ENCODE measurements at regions of chr20 and their contacts with region 1.

Region 1: GRCh38 chr20:63223221-63224207 is 7.6 kb upstream of the YTHDF1 start:
- DNase-seq: peak; percentile 73
- ATAC-seq: peak; percentile 67
- H3K4me3 ChIP-seq: no peak overlapping the region
- H3K27ac ChIP-seq: no peak overlapping the region
- H3K4me1 ChIP-seq: peaks cover 4% of the 10 kb centered on the region; the same call in 1 of the 2 replicates
- H3K27me3 ChIP-seq: peaks cover 32 to 77% of the 10 kb centered on the region in 2 experiments; a peak in 4 of 5 replicates
- CTCF ChIP-seq: peak; percentile 96
- EP300 ChIP-seq: no peak
- POLR2A ChIP-seq: no peak
- RAD21 ChIP-seq: peak; percentile 81

Region 2: GRCh38 chr20:63252284-63252711 is 28.8 kb after region 1 on chr20:
- CTCF ChIA-PET with region 1: interaction called, 10 read pairs
- POLR2A ChIA-PET with region 1: no interaction called
- in situ Hi-C with region 1: no loop called
- intact Hi-C with region 1: no loop called
- DNase-seq: no peak
- ATAC-seq: no peak
- H3K4me3 ChIP-seq: no peak overlapping the region
- H3K27ac ChIP-seq: no peak overlapping the region
- H3K4me1 ChIP-seq: peaks cover 17% of the 10 kb centered on the region
- H3K27me3 ChIP-seq: peaks cover 26 to 84% of the 10 kb centered on the region in 2 experiments
- CTCF ChIP-seq: no peak
- EP300 ChIP-seq: no peak
- POLR2A ChIP-seq: no peak
- RAD21 ChIP-seq: no peak

Region 3: DNA sequence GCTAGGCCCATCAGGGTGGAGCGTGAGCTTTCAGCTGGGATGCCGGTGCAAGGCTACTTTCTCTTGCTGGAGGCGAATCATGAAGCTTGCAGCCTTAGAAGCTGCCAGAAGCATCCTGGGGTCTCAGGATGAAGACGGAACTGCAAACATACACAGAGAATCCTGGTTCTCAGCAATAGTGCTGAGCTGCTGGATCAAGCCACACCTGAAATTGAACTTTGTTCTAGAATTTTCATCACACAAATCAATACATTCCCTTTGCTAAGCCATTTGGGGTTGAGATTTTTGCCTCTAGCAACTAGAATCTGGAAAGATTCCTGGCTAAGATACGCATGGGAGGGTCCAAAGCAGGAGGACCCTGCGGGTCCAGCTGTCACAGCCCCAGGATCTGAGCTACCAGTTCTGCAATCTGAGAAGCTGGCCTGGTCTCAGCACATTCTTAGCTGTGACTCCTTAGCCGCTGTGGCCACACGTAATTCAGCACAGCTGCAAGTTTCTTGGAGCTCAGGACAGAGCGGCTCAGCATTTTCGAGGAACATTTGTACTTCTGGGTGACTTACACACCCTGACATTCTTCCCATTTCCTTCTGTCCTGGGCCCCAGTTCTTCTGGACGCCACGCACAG is 42.5 kb after region 1 on chr20:
- CTCF ChIA-PET with region 1: no interaction called
- POLR2A ChIA-PET with region 1: no interaction called
- in situ Hi-C with region 1: no loop called
- intact Hi-C with region 1: loop called (anchors 5 kb)
- DNase-seq: no peak
- ATAC-seq: no peak
- H3K4me3 ChIP-seq: no peak overlapping the region
- H3K27ac ChIP-seq: no peak overlapping the region
- H3K4me1 ChIP-seq: peaks cover 48% of the 10 kb centered on the region
- H3K27me3 ChIP-seq: peaks cover 11 to 50% of the 10 kb centered on the region in 2 experiments; a peak in 4 of 5 replicates
- CTCF ChIP-seq: no peak
- EP300 ChIP-seq: no peak
- POLR2A ChIP-seq: no peak
- RAD21 ChIP-seq: no peak

Region 4: GRCh38 chr20:63290677-63291472 is 67.4 kb after region 1 on chr20:
- CTCF ChIA-PET with region 1: interaction called, 7 read pairs
- POLR2A ChIA-PET with region 1: no interaction called
- in situ Hi-C with region 1: no loop called
- intact Hi-C with region 1: loop called (anchors 5 kb)
- DNase-seq: peak; percentile 41
- ATAC-seq: peak; percentile 71
- H3K4me3 ChIP-seq: peak overlapping the region in 1 of 3 experiments; percentile 13; a peak in 1 of 6 replicates
- H3K27ac ChIP-seq: no peak overlapping the region
- H3K4me1 ChIP-seq: peaks cover 15% of the 10 kb centered on the region
- H3K27me3 ChIP-seq: peaks cover 12 to 37% of the 10 kb centered on the region in 2 experiments; a peak in 4 of 5 replicates
- CTCF ChIP-seq: peak; percentile 96
- EP300 ChIP-seq: no peak
- POLR2A ChIP-seq: peak; percentile 2 to 56; a peak in 2 of 4 replicates
- RAD21 ChIP-seq: peak; percentile 86

Region 5: DNA sequence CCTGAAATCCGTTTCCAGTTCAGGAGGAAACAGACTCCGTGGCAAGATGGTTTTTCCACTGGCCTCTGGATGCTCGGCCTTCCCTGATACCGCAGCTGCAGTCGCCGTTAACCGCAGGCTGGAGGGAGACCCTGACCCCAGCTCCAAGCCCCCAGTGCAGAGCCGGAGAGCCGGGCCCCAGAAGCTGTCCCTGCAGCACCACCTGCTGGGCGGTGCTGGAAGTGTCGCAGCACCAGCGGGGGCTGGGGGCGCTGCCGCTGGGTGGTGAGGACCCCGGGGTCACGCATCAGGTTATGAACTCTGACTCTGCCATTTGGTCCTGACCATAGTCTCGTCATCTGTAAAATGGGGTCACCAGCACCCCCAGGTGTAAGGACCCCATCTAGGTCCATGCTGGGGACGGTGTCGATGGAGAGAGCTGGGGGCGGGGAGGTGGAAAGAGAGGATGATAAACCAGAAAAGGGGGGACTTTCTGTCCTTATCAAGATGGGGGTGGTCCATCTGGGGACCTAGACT is 158.4 kb after region 1 on chr20:
- CTCF ChIA-PET with region 1: no interaction called
- POLR2A ChIA-PET with region 1: no interaction called
- in situ Hi-C with region 1: no loop called
- intact Hi-C with region 1: loop called (anchors 1 kb)
- DNase-seq: no peak
- ATAC-seq: peak; percentile 51
- H3K4me3 ChIP-seq: no peak overlapping the region
- H3K27ac ChIP-seq: no peak overlapping the region
- H3K4me1 ChIP-seq: peaks cover 14% of the 10 kb centered on the region
- H3K27me3 ChIP-seq: peaks cover 5 to 32% of the 10 kb centered on the region in 2 experiments; a peak in 3 of 5 replicates
- CTCF ChIP-seq: peak; percentile 100
- EP300 ChIP-seq: no peak
- POLR2A ChIP-seq: no peak
- RAD21 ChIP-seq: peak; percentile 99